Activated B cell treated with CpG ODN at 0.5 μM for 24 hours (primary cell): ENCODE measurements at regions of chr4 and their contacts with region 1.

Region 1: DNA sequence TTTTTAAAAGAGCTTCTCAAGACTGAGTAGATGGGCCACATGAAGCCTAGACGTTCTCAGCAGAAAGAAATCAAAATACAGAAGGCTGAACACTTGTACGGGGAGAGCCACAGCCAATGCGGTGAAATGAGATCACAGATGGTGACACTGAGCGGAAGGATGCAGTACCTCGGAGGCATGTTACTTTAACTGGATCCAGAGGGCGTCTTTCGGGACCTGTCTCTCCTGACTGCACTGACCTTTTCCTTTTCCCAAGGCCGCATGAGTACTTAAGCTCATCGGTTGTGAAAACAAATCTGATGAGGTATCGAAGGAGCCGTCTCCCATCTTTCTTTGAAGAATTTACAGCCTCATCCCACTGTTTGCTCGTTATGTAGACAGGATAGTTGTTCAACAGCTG is 32.6 kb downstream of the BEND4 start:
- DNase-seq: no peak
- ATAC-seq: no peak
- H3K4me3 Mint-ChIP-seq: no peak overlapping the region
- H3K27ac Mint-ChIP-seq: no peak overlapping the region
- H3K4me1 Mint-ChIP-seq: no peaks in the 10 kb centered on the region
- H3K27me3 Mint-ChIP-seq: no peaks in the 10 kb centered on the region
- CTCF ChIP-seq: no peak

Region 2: DNA sequence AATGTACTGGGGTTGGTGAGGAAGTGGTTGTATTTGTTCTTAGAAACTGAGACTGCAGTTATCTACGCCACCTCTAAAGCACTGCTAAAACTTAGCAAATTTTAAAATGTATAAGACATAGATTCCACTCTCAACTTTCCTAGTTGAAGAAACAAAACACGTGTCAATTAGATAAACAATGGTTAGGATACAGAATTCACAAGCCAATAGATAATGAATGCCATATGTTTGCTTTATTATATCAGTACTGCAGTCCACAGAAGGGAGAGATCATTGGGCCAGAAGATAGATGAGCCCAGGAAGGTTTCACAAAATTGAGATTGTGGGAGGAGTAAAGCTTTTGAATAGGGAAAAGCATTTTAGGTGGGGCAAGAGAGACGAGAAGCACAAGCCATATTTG is 170.4 kb before region 1 on chr4:
- CTCF ChIA-PET with region 1: no interaction called
- POLR2A ChIA-PET with region 1: no interaction called
- intact Hi-C with region 1: loop called (anchors 10 kb)
- DNase-seq: no peak
- ATAC-seq: no peak
- H3K4me3 Mint-ChIP-seq: no peak overlapping the region
- H3K27ac Mint-ChIP-seq: no peak overlapping the region
- H3K4me1 Mint-ChIP-seq: no peaks in the 10 kb centered on the region
- H3K27me3 Mint-ChIP-seq: no peaks in the 10 kb centered on the region
- CTCF ChIP-seq: no peak